ENCODE measurements at regions of chr6 and their contacts with region 1.

Region 1: DNA sequence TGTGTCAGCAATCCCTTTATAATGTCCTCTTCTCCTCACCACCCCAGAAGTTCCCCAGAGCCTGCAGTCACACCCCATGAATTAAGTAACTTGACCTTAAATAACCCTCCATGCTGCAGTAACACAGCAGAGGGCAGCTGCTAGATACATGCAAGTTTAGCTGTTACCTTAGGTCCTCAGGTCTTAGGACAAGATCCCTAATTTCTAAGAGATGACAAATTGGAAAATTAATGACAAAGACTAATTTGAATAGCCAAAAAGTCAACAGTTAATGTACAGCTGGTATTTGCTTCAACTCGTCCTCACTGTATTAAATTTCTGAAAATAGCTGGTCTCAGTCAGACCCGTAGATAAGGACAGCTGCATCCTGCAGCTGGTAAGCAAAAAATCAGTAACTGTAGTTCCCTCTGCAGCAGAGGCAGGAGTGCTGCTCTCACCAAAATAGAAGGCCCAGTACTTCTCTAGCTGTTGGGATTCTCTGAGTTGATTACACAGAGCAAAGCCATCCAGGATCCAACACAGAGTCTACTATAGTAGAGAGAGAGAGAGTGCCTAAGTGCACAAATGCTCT is 62.4 kb downstream of the TNFRSF21 start:
- DNase-seq: peak; percentile 47
- H3K4me3 ChIP-seq: no peak overlapping the region
- H3K27ac ChIP-seq: peak overlapping the region in 1 of 2 experiments; percentile 86; a peak in 2 of 4 replicates
- H3K4me1 ChIP-seq: peaks cover 6 to 34% of the 10 kb centered on the region in 2 experiments; a peak in 3 of 4 replicates
- H3K27me3 ChIP-seq: no peaks in the 10 kb centered on the region
- CTCF ChIP-seq: no peak
- EP300 ChIP-seq: no peak
- RAD21 ChIP-seq: no peak; the same call in 1 of the 2 replicates

Region 2: GRCh38 chr6:47009566-47009965 is 237.7 kb before region 1 on chr6:
- CTCF ChIA-PET with region 1: no interaction called
- POLR2A ChIA-PET with region 1: no interaction called
- DNase-seq: no peak
- H3K4me3 ChIP-seq: no peak overlapping the region
- H3K27ac ChIP-seq: no peak overlapping the region
- H3K4me1 ChIP-seq: no peaks in the 10 kb centered on the region
- H3K27me3 ChIP-seq: peaks cover 6% of the 10 kb centered on the region; the same call in 1 of the 2 replicates
- CTCF ChIP-seq: peak; percentile 23; the same call in 1 of the 2 replicates
- EP300 ChIP-seq: no peak
- RAD21 ChIP-seq: peak; percentile 38

Region 3: GRCh38 chr6:47235964-47236760 is 11.2 kb before region 1 on chr6:
- CTCF ChIA-PET with region 1: interaction called, 14 read pairs
- POLR2A ChIA-PET with region 1: no interaction called
- DNase-seq: peak; percentile 75
- H3K4me3 ChIP-seq: no peak overlapping the region
- H3K27ac ChIP-seq: peak overlapping the region in 1 of 2 experiments; percentile 81; a peak in 2 of 4 replicates
- H3K4me1 ChIP-seq: peaks cover 0 to 27% of the 10 kb centered on the region in 2 experiments; a peak in 2 of 4 replicates
- H3K27me3 ChIP-seq: no peaks in the 10 kb centered on the region
- CTCF ChIP-seq: no peak
- EP300 ChIP-seq: peak in 1 of 2 experiments; percentile 72; a peak in 2 of 4 replicates
- RAD21 ChIP-seq: peak; percentile 43

Region 4: GRCh38 chr6:47263268-47263667 is 16.0 kb after region 1 on chr6:
- CTCF ChIA-PET with region 1: no interaction called
- POLR2A ChIA-PET with region 1: no interaction called
- DNase-seq: no peak
- H3K4me3 ChIP-seq: no peak overlapping the region
- H3K27ac ChIP-seq: no peak overlapping the region
- H3K4me1 ChIP-seq: no peaks in the 10 kb centered on the region
- H3K27me3 ChIP-seq: no peaks in the 10 kb centered on the region
- CTCF ChIP-seq: no peak
- EP300 ChIP-seq: no peak
- RAD21 ChIP-seq: no peak

Region 5: DNA sequence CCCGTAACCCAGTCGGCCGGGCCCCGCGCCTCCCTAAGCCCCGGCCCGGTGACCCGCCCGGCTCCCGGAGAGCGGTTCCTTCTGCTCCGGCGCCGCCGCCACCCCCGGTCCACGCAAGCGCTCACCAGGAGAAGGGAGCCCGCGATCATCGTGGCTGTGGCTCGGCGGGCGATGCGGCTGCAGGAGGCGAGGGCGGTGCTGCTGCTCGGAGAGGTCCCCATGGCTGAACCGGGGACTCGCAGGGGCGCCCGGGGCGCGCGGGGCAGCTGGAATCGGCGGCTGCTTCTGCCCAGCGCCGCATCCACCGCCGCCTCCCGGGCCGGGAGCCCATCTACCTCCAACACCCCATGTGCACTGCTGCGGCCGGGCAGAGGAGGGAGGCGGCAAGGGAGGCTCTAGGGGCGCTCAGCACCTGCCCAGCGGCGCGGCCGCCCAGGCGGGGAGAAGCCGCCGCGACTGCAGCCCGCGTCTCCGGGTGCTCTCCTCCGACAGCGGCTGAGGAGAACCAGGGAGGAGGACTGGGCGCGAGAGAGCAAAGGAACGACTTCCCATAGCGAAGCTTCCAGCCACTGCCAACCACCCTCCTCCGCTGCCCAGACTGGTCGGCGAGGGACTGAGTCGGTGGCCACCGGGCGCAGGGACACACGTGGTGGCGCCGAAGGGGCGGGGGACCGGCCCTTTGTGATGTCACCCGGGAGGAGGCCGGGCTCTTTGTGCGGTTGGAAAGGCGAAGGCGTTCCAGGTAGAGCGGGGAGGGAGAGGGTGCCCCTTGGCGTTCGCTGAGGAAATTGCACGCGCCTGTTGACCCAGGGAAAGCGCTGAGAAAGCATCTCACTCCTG is 62.2 kb after region 1 on chr6 and contains the start of gene TNFRSF21:
- CTCF ChIA-PET with region 1: interaction called, 13 read pairs
- POLR2A ChIA-PET with region 1: interaction called, 3 read pairs
- DNase-seq: peak; percentile 93
- H3K4me3 ChIP-seq: peak within 1 kb of the TSS; percentile 76 to 82
- H3K27ac ChIP-seq: peak within 1 kb of the TSS in 1 of 2 experiments; percentile 76; a peak in 1 of 4 replicates
- H3K4me1 ChIP-seq: peaks cover 0 to 6% of the 10 kb centered on the region in 2 experiments; a peak in 2 of 4 replicates
- H3K27me3 ChIP-seq: peaks cover 11% of the 10 kb centered on the region; the same call in 1 of the 2 replicates
- CTCF ChIP-seq: peak; percentile 92
- EP300 ChIP-seq: no peak
- RAD21 ChIP-seq: peak; percentile 98
- polyA plus RNA-seq, gene TNFRSF21: 5.8 and 9.2 TPM in 2 replicates

Region 6: DNA sequence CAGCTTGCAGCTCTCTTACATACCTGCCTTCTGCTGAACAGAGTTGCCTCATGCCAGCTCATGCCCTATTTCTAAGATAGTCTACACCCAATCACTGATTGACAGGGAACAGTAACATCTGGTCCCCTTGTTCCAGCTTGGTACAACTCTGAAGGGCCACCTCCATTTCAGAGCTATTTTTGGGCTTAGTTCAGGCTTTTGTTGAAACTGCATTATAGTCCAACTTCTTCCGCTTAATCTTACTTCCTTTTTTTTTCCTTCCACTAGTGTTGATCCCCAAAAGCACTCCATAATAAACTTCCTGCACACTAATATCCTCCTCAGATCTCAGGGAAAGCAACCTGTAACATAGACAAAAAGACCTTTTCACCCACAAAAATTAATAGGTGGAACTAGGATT is 128.1 kb after region 1 on chr6:
- CTCF ChIA-PET with region 1: no interaction called
- POLR2A ChIA-PET with region 1: no interaction called
- DNase-seq: no peak
- H3K4me3 ChIP-seq: no peak overlapping the region
- H3K27ac ChIP-seq: no peak overlapping the region
- H3K4me1 ChIP-seq: no peaks in the 10 kb centered on the region
- H3K27me3 ChIP-seq: peaks cover 18% of the 10 kb centered on the region; the same call in 1 of the 2 replicates
- CTCF ChIP-seq: no peak
- EP300 ChIP-seq: no peak
- RAD21 ChIP-seq: no peak

Measured in SK-N-SH (cell line).